ENCODE measurements at regions of chr11 and their contacts with region 1.

Region 1: DNA sequence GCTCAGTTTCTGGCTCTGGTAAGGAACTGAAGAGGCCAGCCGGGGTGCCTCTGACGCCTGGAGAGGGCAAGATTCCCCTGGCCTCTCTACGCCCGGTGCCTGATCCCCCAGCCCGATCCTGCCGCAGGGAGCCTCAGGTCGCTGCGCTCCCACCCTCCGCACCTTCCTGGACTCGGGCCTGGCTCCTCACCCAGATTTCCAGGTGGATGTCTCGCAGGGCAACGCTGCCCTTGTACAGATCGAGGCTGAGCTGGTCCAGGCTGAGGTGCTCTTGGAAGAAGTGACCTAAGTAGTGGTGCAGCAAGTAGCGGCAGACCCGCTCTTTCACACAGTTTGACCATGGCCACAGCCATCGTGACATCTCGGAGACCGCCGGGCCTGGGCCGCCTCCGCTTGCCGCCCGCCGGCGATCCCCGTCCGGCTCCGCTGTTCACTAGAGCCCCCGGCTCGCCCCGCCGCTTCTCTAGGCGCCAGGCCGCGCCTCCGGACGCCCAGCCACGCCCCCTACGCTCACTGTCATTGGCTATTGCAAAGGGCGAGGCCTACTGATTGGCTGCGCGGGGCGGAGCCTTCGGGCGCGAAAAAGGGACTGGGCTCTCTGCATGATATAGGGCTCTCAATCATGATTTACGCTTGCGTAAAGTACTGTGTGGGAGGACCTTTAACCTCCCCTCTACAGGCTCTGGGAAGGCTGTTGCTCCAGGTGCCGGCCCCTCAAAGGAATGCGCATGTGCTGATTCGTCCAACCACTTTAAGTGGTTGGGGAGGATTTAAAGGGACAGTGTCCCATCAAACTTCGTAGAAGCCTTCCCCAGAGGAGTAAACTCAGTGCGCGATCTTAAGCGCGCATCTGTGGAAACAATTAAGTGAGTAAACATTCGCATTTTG is at the start of gene ATG2A:
- DNase-seq: peak; percentile 98 to 100 (median 99)
- ATAC-seq: peak; percentile 96
- H3K4me3 ChIP-seq: peak within 1 kb of the TSS; percentile 76 to 79
- H3K4me3 Mint-ChIP-seq: peak within 1 kb of the TSS; percentile 94
- H3K27ac ChIP-seq: peak within 1 kb of the TSS; percentile 77 to 93
- H3K27ac Mint-ChIP-seq: peak within 1 kb of the TSS; percentile 94
- H3K4me1 ChIP-seq: peaks cover 26% of the 10 kb centered on the region
- H3K4me1 Mint-ChIP-seq: peaks cover 22% of the 10 kb centered on the region
- H3K27me3 ChIP-seq: no peaks in the 10 kb centered on the region
- H3K27me3 Mint-ChIP-seq: no peaks in the 10 kb centered on the region
- CTCF ChIP-seq: no peak
- total RNA-seq, gene ATG2A: 285 to 311 TPM

Region 2: DNA sequence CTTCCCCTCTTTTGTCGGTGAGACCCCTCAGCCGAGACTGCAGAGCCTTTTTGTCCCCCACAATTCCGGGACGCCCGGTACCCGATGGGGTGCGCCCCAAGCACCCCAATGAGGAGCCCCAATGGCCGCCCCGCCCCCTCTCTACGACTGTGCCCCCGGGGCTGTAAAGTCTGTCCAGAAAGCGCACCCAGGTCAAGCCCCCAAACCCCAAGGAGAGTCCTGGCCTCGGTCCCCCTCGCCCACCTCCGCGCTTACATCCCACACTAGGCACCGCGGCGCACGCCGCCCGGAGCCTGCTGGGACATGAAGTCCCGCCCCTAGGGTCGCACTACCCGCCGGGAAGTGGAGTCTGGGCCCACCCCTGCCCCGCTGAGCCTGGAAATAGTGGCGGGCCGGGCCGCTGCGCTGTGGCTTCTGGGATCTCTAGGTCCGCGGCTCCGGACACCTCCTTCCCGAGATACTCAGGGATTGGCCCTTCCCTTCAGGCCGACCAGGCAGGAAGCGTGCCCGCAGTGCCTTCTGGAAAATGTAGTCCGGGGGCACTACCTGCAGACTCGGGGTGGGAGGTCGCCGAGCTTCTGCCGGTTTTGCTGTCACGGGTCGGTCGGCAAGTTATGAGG is 106.6 kb before region 1 on chr11 and contains the start of gene MEN1:
- CTCF ChIA-PET with region 1: no interaction called
- POLR2A ChIA-PET with region 1: no interaction called
- intact Hi-C with region 1: loop called in 1 of 2 experiments (anchors 1 kb)
- DNase-seq: peak; percentile 49 to 87 (median 75)
- ATAC-seq: peak; percentile 87
- H3K4me3 ChIP-seq: peak within 1 kb of the TSS; percentile 79 to 99
- H3K4me3 Mint-ChIP-seq: peak within 1 kb of the TSS; percentile 95
- H3K27ac ChIP-seq: peak within 1 kb of the TSS; percentile 60 to 92
- H3K27ac Mint-ChIP-seq: peak within 1 kb of the TSS; percentile 94
- H3K4me1 ChIP-seq: peaks cover 14% of the 10 kb centered on the region
- H3K4me1 Mint-ChIP-seq: peaks cover 31% of the 10 kb centered on the region
- H3K27me3 ChIP-seq: no peaks in the 10 kb centered on the region
- H3K27me3 Mint-ChIP-seq: no peaks in the 10 kb centered on the region
- CTCF ChIP-seq: no peak
- total RNA-seq, gene MEN1: 17.6 to 19.1 TPM

Region 3: DNA sequence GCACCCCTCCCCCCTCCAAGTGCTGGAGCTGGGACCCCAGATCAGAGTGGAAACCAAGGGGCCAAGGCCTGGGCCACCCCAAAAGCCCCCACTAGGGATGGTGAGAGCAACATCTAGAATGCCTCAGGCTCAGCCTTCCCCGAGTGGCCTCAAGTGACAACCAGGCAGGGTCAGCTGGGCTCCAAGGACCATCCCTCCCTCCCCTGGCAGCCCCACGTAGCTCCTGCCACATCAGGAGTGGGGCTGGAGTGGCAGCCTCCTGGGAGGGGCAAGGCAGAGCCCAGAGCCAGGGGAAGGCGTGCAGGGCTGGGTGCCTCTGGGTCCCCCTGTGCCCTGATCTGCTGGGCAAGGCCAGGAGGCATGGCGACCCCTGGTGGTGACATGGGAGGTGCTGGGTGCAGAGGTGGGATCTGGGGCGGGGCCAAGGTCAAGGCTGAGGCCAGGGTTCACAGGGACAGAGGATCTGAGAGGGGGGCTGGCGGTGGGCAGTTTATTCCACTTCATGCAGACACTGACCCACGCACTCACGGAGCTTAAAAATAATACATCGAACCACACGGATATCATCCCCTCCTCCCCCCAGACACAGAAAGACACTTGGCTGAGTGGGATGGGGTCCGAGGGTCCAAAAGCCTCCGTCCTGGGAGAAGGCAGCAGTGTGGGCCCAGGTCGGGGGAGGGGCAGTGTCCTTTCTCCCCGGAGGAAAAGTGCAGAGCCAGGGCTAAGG is 22.8 kb before region 1 on chr11:
- CTCF ChIA-PET with region 1: interaction called, 12 read pairs
- POLR2A ChIA-PET with region 1: no interaction called
- intact Hi-C with region 1: loop called in 1 of 2 experiments (anchors 2 kb)
- DNase-seq: peak; percentile 85 to 97 (median 92)
- ATAC-seq: peak; percentile 86
- H3K4me3 ChIP-seq: no peak overlapping the region
- H3K4me3 Mint-ChIP-seq: no peak overlapping the region
- H3K27ac ChIP-seq: no peak overlapping the region
- H3K27ac Mint-ChIP-seq: no peak overlapping the region
- H3K4me1 ChIP-seq: peaks cover 4% of the 10 kb centered on the region
- H3K4me1 Mint-ChIP-seq: peaks cover 2% of the 10 kb centered on the region
- H3K27me3 ChIP-seq: no peaks in the 10 kb centered on the region
- H3K27me3 Mint-ChIP-seq: no peaks in the 10 kb centered on the region
- CTCF ChIP-seq: peak; percentile 69

Region 4: GRCh38 chr11:65040847-65041621 is 124.0 kb after region 1 on chr11 and contains the start of gene SAC3D1:
- CTCF ChIA-PET with region 1: no interaction called
- POLR2A ChIA-PET with region 1: no interaction called
- intact Hi-C with region 1: loop called in 1 of 2 experiments (anchors 2 kb)
- DNase-seq: peak; percentile 67 to 94 (median 85)
- ATAC-seq: peak; percentile 90
- H3K4me3 ChIP-seq: peak within 1 kb of the TSS; percentile 63 to 76
- H3K4me3 Mint-ChIP-seq: peak within 1 kb of the TSS; percentile 93
- H3K27ac ChIP-seq: peak within 1 kb of the TSS; percentile 34 to 82
- H3K27ac Mint-ChIP-seq: peak within 1 kb of the TSS; percentile 91
- H3K4me1 ChIP-seq: peaks cover 17% of the 10 kb centered on the region
- H3K4me1 Mint-ChIP-seq: peaks cover 15% of the 10 kb centered on the region
- H3K27me3 ChIP-seq: no peaks in the 10 kb centered on the region
- H3K27me3 Mint-ChIP-seq: no peaks in the 10 kb centered on the region
- CTCF ChIP-seq: no peak
- total RNA-seq, gene SAC3D1: 0.57 to 0.94 TPM

Region 5: GRCh38 chr11:65180877-65181568 is 264.0 kb after region 1 on chr11:
- CTCF ChIA-PET with region 1: no interaction called
- POLR2A ChIA-PET with region 1: no interaction called
- intact Hi-C with region 1: loop called in 1 of 2 experiments (anchors 10 kb)
- DNase-seq: peak; percentile 17 to 73 (median 53)
- ATAC-seq: peak; percentile 68
- H3K4me3 ChIP-seq: peak overlapping the region; percentile 85 to 95
- H3K4me3 Mint-ChIP-seq: peak overlapping the region; percentile 91
- H3K27ac ChIP-seq: peak overlapping the region in 1 of 2 experiments; percentile 23
- H3K27ac Mint-ChIP-seq: peak overlapping the region; percentile 80
- H3K4me1 ChIP-seq: peaks cover 24% of the 10 kb centered on the region
- H3K4me1 Mint-ChIP-seq: peaks cover 28% of the 10 kb centered on the region
- H3K27me3 ChIP-seq: no peaks in the 10 kb centered on the region
- H3K27me3 Mint-ChIP-seq: no peaks in the 10 kb centered on the region
- CTCF ChIP-seq: peak; percentile 57

Measured in CD8-positive, alpha-beta T cell (primary cell).